SK-N-SH (cell line): ENCODE measurements at regions of chr17 and their contacts with region 1.

Region 1: DNA sequence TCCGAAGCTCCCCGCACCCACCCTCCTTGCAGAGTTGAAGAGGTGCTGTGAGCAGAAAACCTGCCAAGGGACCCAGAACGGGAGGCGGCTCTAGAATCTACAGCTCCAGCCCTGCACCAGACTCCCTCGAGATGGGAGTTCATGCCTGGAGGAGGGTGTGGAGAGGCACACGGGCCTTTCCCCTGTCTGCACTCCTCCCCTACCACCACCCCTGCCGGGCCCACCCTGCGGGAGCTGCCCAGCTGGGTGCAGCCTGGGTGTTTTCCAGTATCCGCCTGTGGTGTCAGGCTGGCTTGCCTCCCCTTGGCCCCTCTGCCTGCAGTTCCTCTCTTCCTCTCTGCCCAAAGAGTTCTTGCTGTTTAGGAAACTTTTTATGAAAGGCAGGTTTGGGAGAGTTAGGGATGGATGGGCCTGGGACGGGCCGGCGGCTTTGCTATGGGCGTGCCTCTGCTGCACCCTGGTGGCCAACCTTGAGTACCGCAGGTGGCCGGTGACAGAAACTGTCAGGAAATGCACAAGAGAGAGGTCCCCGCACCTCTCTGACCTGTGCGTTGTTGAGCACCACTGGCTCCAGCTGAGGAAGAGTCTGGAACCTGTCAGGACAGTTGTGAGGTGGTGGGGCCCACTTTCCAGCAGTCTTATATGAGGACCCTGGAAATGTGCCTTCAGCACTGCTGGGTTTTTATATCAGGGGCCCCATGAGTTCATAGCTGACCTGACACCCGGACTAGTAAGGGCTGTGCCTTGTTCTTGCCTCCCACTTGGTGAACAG is 354.1 kb downstream of the SEC14L1 start:
- DNase-seq: peak; percentile 96
- H3K4me3 ChIP-seq: no peak overlapping the region; a peak in 1 of 4 replicates
- H3K27ac ChIP-seq: peak overlapping the region; percentile 18 to 29; a peak in 2 of 4 replicates
- H3K4me1 ChIP-seq: peaks cover 4% of the 10 kb centered on the region in 2 experiments; a peak in 2 of 4 replicates
- H3K27me3 ChIP-seq: no peaks in the 10 kb centered on the region
- CTCF ChIP-seq: peak; percentile 100
- EP300 ChIP-seq: no peak
- RAD21 ChIP-seq: peak; percentile 100

Region 2: DNA sequence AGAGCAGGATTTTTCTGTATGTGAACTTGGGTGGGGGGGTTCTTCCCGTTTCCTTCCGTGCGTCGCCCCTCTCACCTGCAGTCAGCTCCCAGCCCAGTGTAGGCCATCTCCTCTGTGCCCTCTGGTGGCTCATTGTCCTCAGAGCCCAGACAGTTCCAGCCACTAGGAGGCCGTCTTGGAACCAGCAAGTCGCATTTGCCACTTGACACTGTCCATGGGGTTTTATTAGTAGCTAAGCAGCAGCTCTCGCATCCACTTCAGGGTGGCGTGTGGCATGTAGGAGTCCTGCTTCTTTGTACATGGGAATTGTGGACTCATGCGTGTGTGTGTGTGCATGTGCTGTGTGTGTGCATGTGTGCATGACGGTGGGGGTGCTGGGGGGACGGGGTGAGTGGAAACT is 280.1 kb before region 1 on chr17:
- CTCF ChIA-PET with region 1: no interaction called
- POLR2A ChIA-PET with region 1: no interaction called
- DNase-seq: peak; percentile 77
- H3K4me3 ChIP-seq: no peak overlapping the region
- H3K27ac ChIP-seq: no peak overlapping the region
- H3K4me1 ChIP-seq: no peaks in the 10 kb centered on the region
- H3K27me3 ChIP-seq: no peaks in the 10 kb centered on the region
- CTCF ChIP-seq: peak; percentile 65
- EP300 ChIP-seq: no peak
- RAD21 ChIP-seq: peak; percentile 66

Region 3: GRCh38 chr17:77354420-77355241 is 140.2 kb before region 1 on chr17:
- CTCF ChIA-PET with region 1: interaction called, 16 read pairs
- POLR2A ChIA-PET with region 1: no interaction called
- DNase-seq: no peak
- H3K4me3 ChIP-seq: no peak overlapping the region
- H3K27ac ChIP-seq: peak overlapping the region; percentile 3 to 28; a peak in 3 of 4 replicates
- H3K4me1 ChIP-seq: peaks cover 9 to 55% of the 10 kb centered on the region in 2 experiments; a peak in 2 of 4 replicates
- H3K27me3 ChIP-seq: no peaks in the 10 kb centered on the region
- CTCF ChIP-seq: no peak
- EP300 ChIP-seq: no peak
- RAD21 ChIP-seq: no peak

Region 4: GRCh38 chr17:77404812-77405581 is 89.9 kb before region 1 on chr17:
- CTCF ChIA-PET with region 1: interaction called, 85 read pairs
- POLR2A ChIA-PET with region 1: no interaction called
- DNase-seq: no peak
- H3K4me3 ChIP-seq: no peak overlapping the region
- H3K27ac ChIP-seq: peak overlapping the region in 1 of 2 experiments; percentile 55; a peak in 2 of 4 replicates
- H3K4me1 ChIP-seq: peaks cover 27 to 40% of the 10 kb centered on the region in 2 experiments; a peak in 3 of 4 replicates
- H3K27me3 ChIP-seq: no peaks in the 10 kb centered on the region
- CTCF ChIP-seq: no peak
- EP300 ChIP-seq: no peak; a peak in 1 of 4 replicates
- RAD21 ChIP-seq: no peak

Region 5: GRCh38 chr17:77451245-77451893 is 43.5 kb before region 1 on chr17:
- CTCF ChIA-PET with region 1: interaction called, 566 read pairs
- POLR2A ChIA-PET with region 1: no interaction called
- DNase-seq: peak; percentile 93
- H3K4me3 ChIP-seq: peak overlapping the region; percentile 61 to 79
- H3K27ac ChIP-seq: peak overlapping the region; percentile 89 to 95
- H3K4me1 ChIP-seq: peaks cover 28 to 56% of the 10 kb centered on the region in 2 experiments
- H3K27me3 ChIP-seq: no peaks in the 10 kb centered on the region
- CTCF ChIP-seq: no peak
- EP300 ChIP-seq: no peak
- RAD21 ChIP-seq: no peak

Region 6: GRCh38 chr17:77476931-77477877 is 17.6 kb before region 1 on chr17:
- CTCF ChIA-PET with region 1: interaction called, 37 read pairs
- POLR2A ChIA-PET with region 1: no interaction called
- DNase-seq: peak; percentile 91
- H3K4me3 ChIP-seq: no peak overlapping the region
- H3K27ac ChIP-seq: peak overlapping the region; percentile 57 to 86
- H3K4me1 ChIP-seq: peaks cover 65 to 85% of the 10 kb centered on the region in 2 experiments
- H3K27me3 ChIP-seq: no peaks in the 10 kb centered on the region
- CTCF ChIP-seq: no peak
- EP300 ChIP-seq: peak in 1 of 2 experiments; percentile 73; a peak in 2 of 4 replicates
- RAD21 ChIP-seq: peak; percentile 34; the same call in 1 of the 2 replicates

Region 7: GRCh38 chr17:77609553-77610517 is 115.0 kb after region 1 on chr17:
- CTCF ChIA-PET with region 1: no interaction called
- POLR2A ChIA-PET with region 1: no interaction called
- DNase-seq: no peak
- H3K4me3 ChIP-seq: no peak overlapping the region
- H3K27ac ChIP-seq: no peak overlapping the region
- H3K4me1 ChIP-seq: peaks cover 0 to 3% of the 10 kb centered on the region in 2 experiments; a peak in 1 of 4 replicates
- H3K27me3 ChIP-seq: peaks cover 20% of the 10 kb centered on the region
- CTCF ChIP-seq: no peak
- EP300 ChIP-seq: no peak
- RAD21 ChIP-seq: no peak

Region 8: GRCh38 chr17:77681861-77682260 is 187.0 kb after region 1 on chr17:
- CTCF ChIA-PET with region 1: no interaction called
- POLR2A ChIA-PET with region 1: no interaction called
- DNase-seq: peak; percentile 73
- H3K4me3 ChIP-seq: no peak overlapping the region
- H3K27ac ChIP-seq: no peak overlapping the region
- H3K4me1 ChIP-seq: peaks cover 0 to 11% of the 10 kb centered on the region in 2 experiments; a peak in 1 of 4 replicates
- H3K27me3 ChIP-seq: peaks cover 30% of the 10 kb centered on the region
- CTCF ChIP-seq: no peak
- EP300 ChIP-seq: no peak
- RAD21 ChIP-seq: peak; percentile 17; the same call in 1 of the 2 replicates